IMR-90 (cell line): ENCODE measurements at regions of chr3 and their contacts with region 1.

Region 1: GRCh38 chr3:158659454-158660237 is 12.8 kb downstream of the LXN start:
- DNase-seq: peak; percentile 86
- ATAC-seq: peak; percentile 96
- H3K4me3 ChIP-seq: no peak overlapping the region
- H3K27ac ChIP-seq: no peak overlapping the region
- H3K4me1 ChIP-seq: no peaks in the 10 kb centered on the region
- H3K27me3 ChIP-seq: no peaks in the 10 kb centered on the region
- CTCF ChIP-seq: peak; percentile 76
- POLR2A ChIP-seq: no peak
- RAD21 ChIP-seq: peak; percentile 75

Region 2: GRCh38 chr3:158672293-158673176 is 12.9 kb after region 1 on chr3 and contains the start of gene LXN:
- CTCF ChIA-PET with region 1: interaction called, 13 read pairs
- POLR2A ChIA-PET with region 1: no interaction called
- dilution Hi-C with region 1: no loop called
- in situ Hi-C with region 1: no loop called
- intact Hi-C with region 1: no loop called
- DNase-seq: peak; percentile 87
- ATAC-seq: peak; percentile 99
- H3K4me3 ChIP-seq: peak within 1 kb of the TSS; percentile 59
- H3K27ac ChIP-seq: peak within 1 kb of the TSS; percentile 83
- H3K4me1 ChIP-seq: peaks cover under 1% of the 10 kb centered on the region; the same call in 1 of the 2 replicates
- H3K27me3 ChIP-seq: no peaks in the 10 kb centered on the region
- CTCF ChIP-seq: peak; percentile 95
- POLR2A ChIP-seq: peak; percentile 69; the same call in 1 of the 2 replicates
- RAD21 ChIP-seq: peak; percentile 65
- total RNA-seq, gene LXN: 83.0 and 93.6 TPM in 2 replicates

Region 3: GRCh38 chr3:158722108-158722507 is 62.5 kb after region 1 on chr3:
- CTCF ChIA-PET with region 1: interaction called, 3 read pairs
- POLR2A ChIA-PET with region 1: no interaction called
- dilution Hi-C with region 1: no loop called
- in situ Hi-C with region 1: loop called (anchors 5 kb)
- intact Hi-C with region 1: loop called (anchors 2 kb)
- DNase-seq: no peak
- ATAC-seq: no peak
- H3K4me3 ChIP-seq: no peak overlapping the region
- H3K27ac ChIP-seq: no peak overlapping the region
- H3K4me1 ChIP-seq: peaks cover 38% of the 10 kb centered on the region
- H3K27me3 ChIP-seq: no peaks in the 10 kb centered on the region
- CTCF ChIP-seq: no peak
- POLR2A ChIP-seq: no peak
- RAD21 ChIP-seq: no peak

Region 4: DNA sequence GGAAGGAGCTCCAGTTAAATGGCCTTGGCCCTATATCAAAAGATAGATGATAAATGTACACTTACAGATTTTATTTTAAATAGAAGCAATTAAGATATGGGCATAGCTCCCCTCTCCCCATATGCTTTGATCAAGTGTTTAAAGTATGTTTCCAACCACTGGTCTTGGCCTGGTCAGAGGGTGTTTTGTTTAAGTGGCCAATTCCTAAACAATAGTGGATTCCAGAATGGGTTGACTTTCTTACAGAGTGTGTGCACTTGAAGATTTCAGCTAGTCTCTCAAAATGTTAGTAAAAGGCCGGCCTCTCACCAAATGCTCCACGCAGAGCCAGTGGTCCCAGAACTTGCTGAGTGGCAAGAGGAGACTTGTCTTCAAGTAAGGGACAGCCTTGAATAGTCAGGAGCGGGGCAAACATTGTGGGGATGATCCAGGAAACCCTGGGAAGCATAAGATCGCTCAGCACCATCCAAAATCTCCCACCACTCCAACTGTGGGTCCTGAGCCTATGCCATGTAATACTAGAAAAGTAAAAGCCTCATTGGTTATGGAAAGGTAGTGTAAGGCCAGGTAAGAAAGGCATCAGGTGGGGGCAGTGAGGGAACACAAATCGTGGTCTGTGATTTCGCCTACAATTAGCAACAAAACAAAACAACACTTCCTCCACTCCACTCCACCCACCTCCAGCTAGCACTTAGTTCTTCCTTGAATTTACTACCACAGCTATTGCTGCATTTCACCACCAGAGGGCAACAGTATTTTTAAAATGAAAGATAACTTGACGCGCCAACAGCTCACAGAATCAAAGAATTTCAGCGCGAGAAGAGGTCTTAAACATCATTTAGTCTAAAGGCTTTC is 67.8 kb after region 1 on chr3:
- CTCF ChIA-PET with region 1: interaction called, 8 read pairs
- POLR2A ChIA-PET with region 1: no interaction called
- dilution Hi-C with region 1: no loop called
- in situ Hi-C with region 1: loop called (anchors 5 kb)
- intact Hi-C with region 1: loop called (anchors 2 kb)
- DNase-seq: peak; percentile 83
- ATAC-seq: peak; percentile 12; the same call in 1 of the 2 replicates
- H3K4me3 ChIP-seq: no peak overlapping the region
- H3K27ac ChIP-seq: peak overlapping the region; percentile 84
- H3K4me1 ChIP-seq: peaks cover 42% of the 10 kb centered on the region
- H3K27me3 ChIP-seq: no peaks in the 10 kb centered on the region
- CTCF ChIP-seq: peak; percentile 86
- POLR2A ChIP-seq: no peak
- RAD21 ChIP-seq: peak; percentile 77

Region 5: GRCh38 chr3:158790901-158791589 is 131.4 kb after region 1 on chr3:
- CTCF ChIA-PET with region 1: interaction called, 69 read pairs
- POLR2A ChIA-PET with region 1: interaction called, 3 read pairs
- dilution Hi-C with region 1: no loop called
- in situ Hi-C with region 1: loop called (anchors 5 kb)
- intact Hi-C with region 1: loop called (anchors 1 kb)
- DNase-seq: peak; percentile 86
- ATAC-seq: peak; percentile 36; the same call in 1 of the 2 replicates
- H3K4me3 ChIP-seq: no peak overlapping the region
- H3K27ac ChIP-seq: no peak overlapping the region
- H3K4me1 ChIP-seq: peaks cover 6% of the 10 kb centered on the region
- H3K27me3 ChIP-seq: no peaks in the 10 kb centered on the region
- CTCF ChIP-seq: peak; percentile 95
- POLR2A ChIP-seq: no peak
- RAD21 ChIP-seq: peak; percentile 89

Region 6: DNA sequence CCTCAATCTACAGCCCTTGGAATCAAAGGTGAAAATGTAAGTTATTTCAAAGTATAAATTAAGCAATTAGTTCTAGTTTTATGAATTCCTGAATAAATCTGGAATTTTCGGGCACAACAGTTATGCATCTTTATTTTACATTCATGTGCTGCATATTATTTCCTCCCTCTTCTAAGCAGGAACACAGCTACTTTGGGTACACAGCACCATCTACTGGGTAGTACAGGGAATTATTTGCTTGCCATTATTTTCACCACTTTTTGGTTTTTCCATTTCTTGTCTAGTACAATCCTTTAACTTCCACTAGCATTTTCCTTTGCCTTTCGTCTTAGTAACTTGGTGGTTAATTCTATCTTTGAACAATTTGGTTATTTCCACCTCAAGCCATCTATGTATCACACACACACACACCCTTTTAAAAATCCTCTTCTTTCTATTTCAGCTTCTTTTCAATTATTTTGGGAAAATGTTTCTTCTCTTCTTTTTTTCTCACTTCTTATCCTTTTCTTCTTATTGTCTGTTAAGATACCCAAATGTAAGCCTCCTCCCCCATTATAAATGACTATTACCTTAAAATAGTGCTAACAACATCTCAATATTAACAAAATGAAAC is 593.2 kb after region 1 on chr3:
- CTCF ChIA-PET with region 1: no interaction called
- POLR2A ChIA-PET with region 1: no interaction called
- dilution Hi-C with region 1: no loop called
- in situ Hi-C with region 1: no loop called
- intact Hi-C with region 1: loop called (anchors 10 kb)
- DNase-seq: peak; percentile 41
- ATAC-seq: no peak
- H3K4me3 ChIP-seq: no peak overlapping the region
- H3K27ac ChIP-seq: no peak overlapping the region
- H3K4me1 ChIP-seq: no peaks in the 10 kb centered on the region
- H3K27me3 ChIP-seq: peaks cover 4% of the 10 kb centered on the region; the same call in 1 of the 2 replicates
- CTCF ChIP-seq: peak; percentile 46
- POLR2A ChIP-seq: no peak
- RAD21 ChIP-seq: peak; percentile 46